CD4-positive, alpha-beta T cell (primary cell): ENCODE measurements at regions of chr9 and their contacts with region 1.

Region 1: GRCh38 chr9:125241000-125241862 is at the start of gene HSPA5:
- DNase-seq: peak; percentile 98 to 100 (median 99)
- ATAC-seq: peak; percentile 90
- H3K4me3 ChIP-seq: peak within 1 kb of the TSS; percentile 95
- H3K4me3 Mint-ChIP-seq: peak within 1 kb of the TSS; percentile 98
- H3K27ac ChIP-seq: peak within 1 kb of the TSS; percentile 96 to 98
- H3K27ac Mint-ChIP-seq: peak within 1 kb of the TSS; percentile 98
- H3K4me1 ChIP-seq: peaks cover 38% of the 10 kb centered on the region
- H3K4me1 Mint-ChIP-seq: peaks cover 55% of the 10 kb centered on the region
- H3K27me3 ChIP-seq: no peaks in the 10 kb centered on the region
- H3K27me3 Mint-ChIP-seq: no peaks in the 10 kb centered on the region
- CTCF ChIP-seq: no peak
- total RNA-seq, gene HSPA5: 276 to 280 TPM

Region 2: GRCh38 chr9:124868511-124869465 is 372.4 kb before region 1 on chr9:
- CTCF ChIA-PET with region 1: no interaction called
- POLR2A ChIA-PET with region 1: interaction called, 8 read pairs
- intact Hi-C with region 1: loop called (anchors 5 to 10 kb)
- DNase-seq: peak; percentile 76 to 95 (median 87)
- ATAC-seq: peak; percentile 75
- H3K4me3 ChIP-seq: peak overlapping the region; percentile 84
- H3K4me3 Mint-ChIP-seq: peak overlapping the region; percentile 92
- H3K27ac ChIP-seq: peak overlapping the region; percentile 93 to 96
- H3K27ac Mint-ChIP-seq: peak overlapping the region; percentile 92
- H3K4me1 ChIP-seq: peaks cover 58% of the 10 kb centered on the region
- H3K4me1 Mint-ChIP-seq: peaks cover 56% of the 10 kb centered on the region
- H3K27me3 ChIP-seq: no peaks in the 10 kb centered on the region
- H3K27me3 Mint-ChIP-seq: no peaks in the 10 kb centered on the region
- CTCF ChIP-seq: no peak

Region 3: DNA sequence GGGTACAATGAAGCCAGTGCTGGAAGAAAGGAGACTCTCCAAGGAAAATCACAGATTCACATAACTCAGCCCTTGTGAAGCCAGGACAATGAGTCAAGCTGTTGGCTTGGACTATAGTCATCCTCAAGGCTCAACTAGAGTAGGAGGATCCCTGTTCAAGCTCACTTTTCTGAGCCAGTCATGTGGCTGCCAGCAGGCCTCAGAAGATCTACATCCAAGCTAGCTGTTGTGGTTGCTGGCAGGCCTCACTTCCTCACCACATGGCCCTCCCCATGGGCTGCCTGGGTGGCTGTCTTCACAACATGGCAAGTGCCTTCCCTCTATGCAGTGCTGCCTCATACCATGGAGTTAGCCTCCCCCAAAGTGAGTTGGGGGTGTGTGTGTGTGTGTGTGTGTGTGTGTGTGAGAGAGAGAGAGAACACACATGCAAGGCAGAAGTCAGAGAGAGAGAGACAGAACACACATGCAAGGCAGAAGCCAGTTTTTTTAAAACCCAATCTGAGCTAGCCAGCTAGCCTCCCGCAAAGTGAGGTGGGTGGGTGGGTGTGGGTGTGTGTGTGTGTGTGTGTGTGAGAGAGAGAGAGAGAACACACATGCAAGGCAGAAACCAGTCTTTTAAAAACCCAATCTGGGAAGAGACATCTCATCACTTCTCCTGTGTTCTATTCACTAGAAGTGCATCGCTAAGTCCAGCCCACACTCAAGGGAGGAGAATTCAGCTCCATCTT is 115.0 kb before region 1 on chr9:
- CTCF ChIA-PET with region 1: no interaction called
- POLR2A ChIA-PET with region 1: interaction called, 10 read pairs
- intact Hi-C with region 1: no loop called
- DNase-seq: peak; percentile 66 to 94 (median 78)
- ATAC-seq: peak; percentile 99
- H3K4me3 ChIP-seq: no peak overlapping the region
- H3K4me3 Mint-ChIP-seq: peak overlapping the region; percentile 83
- H3K27ac ChIP-seq: peak overlapping the region in 1 of 2 donors; percentile 6
- H3K27ac Mint-ChIP-seq: peak overlapping the region; percentile 89
- H3K4me1 ChIP-seq: peaks cover 30% of the 10 kb centered on the region
- H3K4me1 Mint-ChIP-seq: peaks cover 44% of the 10 kb centered on the region
- H3K27me3 ChIP-seq: no peaks in the 10 kb centered on the region
- H3K27me3 Mint-ChIP-seq: no peaks in the 10 kb centered on the region
- CTCF ChIP-seq: no peak

Region 4: GRCh38 chr9:125172031-125172755 is 69.0 kb before region 1 on chr9:
- CTCF ChIA-PET with region 1: no interaction called
- POLR2A ChIA-PET with region 1: no interaction called
- intact Hi-C with region 1: no loop called
- DNase-seq: no peak
- ATAC-seq: no peak
- H3K4me3 ChIP-seq: no peak overlapping the region
- H3K4me3 Mint-ChIP-seq: no peak overlapping the region
- H3K27ac ChIP-seq: no peak overlapping the region
- H3K27ac Mint-ChIP-seq: peak overlapping the region; percentile 59
- H3K4me1 ChIP-seq: peaks cover 26% of the 10 kb centered on the region
- H3K4me1 Mint-ChIP-seq: peaks cover 58% of the 10 kb centered on the region
- H3K27me3 ChIP-seq: no peaks in the 10 kb centered on the region
- H3K27me3 Mint-ChIP-seq: no peaks in the 10 kb centered on the region
- CTCF ChIP-seq: no peak

Region 5: GRCh38 chr9:125189361-125190289 is 51.6 kb before region 1 on chr9 and contains the start of gene PPP6C:
- CTCF ChIA-PET with region 1: no interaction called
- POLR2A ChIA-PET with region 1: interaction called, 119 read pairs
- intact Hi-C with region 1: loop called (anchors 1 kb)
- DNase-seq: peak; percentile 95 to 99 (median 97)
- ATAC-seq: peak; percentile 92
- H3K4me3 ChIP-seq: peak within 1 kb of the TSS; percentile 100
- H3K4me3 Mint-ChIP-seq: peak within 1 kb of the TSS; percentile 91
- H3K27ac ChIP-seq: peak within 1 kb of the TSS; percentile 95 to 98
- H3K27ac Mint-ChIP-seq: peak within 1 kb of the TSS; percentile 96
- H3K4me1 ChIP-seq: peaks cover 77% of the 10 kb centered on the region
- H3K4me1 Mint-ChIP-seq: peaks cover 73% of the 10 kb centered on the region
- H3K27me3 ChIP-seq: no peaks in the 10 kb centered on the region
- H3K27me3 Mint-ChIP-seq: no peaks in the 10 kb centered on the region
- CTCF ChIP-seq: peak; percentile 63
- total RNA-seq, gene PPP6C: 32.9 to 35.3 TPM

Region 6: DNA sequence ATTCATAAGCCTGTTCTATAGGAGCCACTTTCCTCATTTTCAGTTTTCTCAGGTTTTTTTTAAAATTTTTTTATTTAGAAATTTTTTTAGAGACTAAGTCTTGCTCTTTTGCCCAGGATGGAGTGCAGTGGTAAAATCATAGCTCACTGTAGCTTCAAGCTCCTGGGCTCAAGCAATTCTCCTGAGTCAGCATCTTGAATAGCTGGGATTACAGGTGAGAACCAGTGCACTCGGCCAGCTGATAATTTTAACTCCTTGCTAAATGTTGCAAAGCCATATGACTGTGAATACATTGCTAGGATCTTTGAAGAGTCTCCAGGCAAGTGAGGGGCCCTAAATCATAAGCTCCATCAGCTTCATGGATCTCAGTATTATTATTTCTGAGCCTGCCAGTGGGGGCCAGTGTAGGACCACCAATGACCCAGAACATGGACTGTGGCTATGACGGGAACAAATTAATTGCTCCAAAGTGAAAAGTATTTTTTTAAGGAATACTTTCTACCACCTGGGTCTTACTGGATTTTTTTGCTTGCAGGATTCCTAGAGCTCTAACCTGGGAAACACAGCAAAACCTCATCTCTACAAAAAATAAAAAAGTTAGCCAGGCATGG is 14.7 kb after region 1 on chr9:
- CTCF ChIA-PET with region 1: interaction called, 23 read pairs
- POLR2A ChIA-PET with region 1: interaction called, 80 read pairs
- intact Hi-C with region 1: loop called (anchors 1 kb)
- DNase-seq: peak in 1 of 14 experiments; percentile 13
- ATAC-seq: no peak
- H3K4me3 ChIP-seq: no peak overlapping the region
- H3K4me3 Mint-ChIP-seq: no peak overlapping the region
- H3K27ac ChIP-seq: no peak overlapping the region
- H3K27ac Mint-ChIP-seq: no peak overlapping the region
- H3K4me1 ChIP-seq: peaks cover under 1% of the 10 kb centered on the region
- H3K4me1 Mint-ChIP-seq: peaks cover 6% of the 10 kb centered on the region
- H3K27me3 ChIP-seq: no peaks in the 10 kb centered on the region
- H3K27me3 Mint-ChIP-seq: no peaks in the 10 kb centered on the region
- CTCF ChIP-seq: no peak

Region 7: DNA sequence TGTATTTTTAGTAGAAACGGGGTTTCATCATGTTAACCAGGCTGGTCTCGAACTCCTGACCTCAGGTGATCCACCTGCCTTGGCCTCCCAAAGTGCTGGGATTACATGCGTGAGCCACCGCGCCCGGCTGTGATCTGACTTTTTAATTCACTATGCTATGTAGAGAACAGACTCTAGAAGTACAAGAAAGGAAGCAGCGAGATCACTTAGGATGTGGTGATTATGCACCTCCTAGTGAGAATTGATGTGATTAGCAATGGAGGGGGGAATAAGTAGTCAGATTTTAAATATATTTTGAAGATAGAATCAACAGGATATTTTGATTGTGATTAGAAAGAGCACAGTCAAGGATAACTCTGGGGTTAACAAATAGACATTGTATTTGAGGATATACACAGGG is 56.7 kb after region 1 on chr9:
- CTCF ChIA-PET with region 1: no interaction called
- POLR2A ChIA-PET with region 1: interaction called, 10 read pairs
- intact Hi-C with region 1: no loop called
- DNase-seq: peak in 3 of 14 experiments; percentile 8 to 18 (median 12)
- ATAC-seq: peak; percentile 58
- H3K4me3 ChIP-seq: no peak overlapping the region
- H3K4me3 Mint-ChIP-seq: no peak overlapping the region
- H3K27ac ChIP-seq: no peak overlapping the region
- H3K27ac Mint-ChIP-seq: peak overlapping the region; percentile 29
- H3K4me1 ChIP-seq: no peaks in the 10 kb centered on the region
- H3K4me1 Mint-ChIP-seq: peaks cover 16% of the 10 kb centered on the region
- H3K27me3 ChIP-seq: no peaks in the 10 kb centered on the region
- H3K27me3 Mint-ChIP-seq: no peaks in the 10 kb centered on the region
- CTCF ChIP-seq: no peak